GM12878 (cell line): ENCODE measurements at regions of chr11 and their contacts with region 1.

Region 1: DNA sequence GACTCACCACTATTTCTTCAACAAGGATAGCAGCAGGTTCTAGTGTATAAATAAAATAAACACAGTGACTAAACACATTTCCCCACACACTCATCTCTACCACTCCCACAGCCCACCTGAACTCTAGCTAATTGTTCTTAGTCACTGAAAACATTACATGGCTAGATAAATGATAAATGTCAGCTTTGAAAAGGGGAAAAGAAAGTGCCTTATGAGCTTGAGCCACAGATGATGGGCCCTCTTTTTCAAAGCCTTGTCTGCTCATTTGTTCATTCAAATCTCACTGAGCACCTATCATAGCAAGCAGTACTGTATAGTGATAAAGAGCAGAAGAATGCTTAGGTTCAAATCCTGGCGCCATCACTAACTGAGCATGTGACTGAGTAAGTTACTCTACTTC is 58.3 kb downstream of the SIK3 start:
- DNase-seq: no peak
- ATAC-seq: peak; percentile 72
- H3K4me3 ChIP-seq: no peak overlapping the region
- H3K27ac ChIP-seq: no peak overlapping the region
- H3K4me1 ChIP-seq: peaks cover 16% of the 10 kb centered on the region
- H3K27me3 ChIP-seq: no peaks in the 10 kb centered on the region
- CTCF ChIP-seq: no peak
- EP300 ChIP-seq: no peak
- POLR2A ChIP-seq: no peak
- RAD21 ChIP-seq: no peak

Region 2: GRCh38 chr11:116762132-116762531 is 277.8 kb before region 1 on chr11:
- CTCF ChIA-PET with region 1: no interaction called
- POLR2A ChIA-PET with region 1: no interaction called
- RAD21 ChIA-PET with region 1: no interaction called
- SMC1A ChIA-PET with region 1: no interaction called
- in situ Hi-C with region 1: no loop called
- intact Hi-C with region 1: no loop called
- DNase-seq: no peak
- ATAC-seq: no peak
- H3K4me3 ChIP-seq: no peak overlapping the region
- H3K27ac ChIP-seq: no peak overlapping the region
- H3K4me1 ChIP-seq: no peaks in the 10 kb centered on the region
- H3K27me3 ChIP-seq: no peaks in the 10 kb centered on the region
- CTCF ChIP-seq: no peak
- EP300 ChIP-seq: no peak
- POLR2A ChIP-seq: no peak
- RAD21 ChIP-seq: no peak

Region 3: GRCh38 chr11:116808386-116809194 is 231.3 kb before region 1 on chr11:
- CTCF ChIA-PET with region 1: no interaction called
- POLR2A ChIA-PET with region 1: no interaction called
- RAD21 ChIA-PET with region 1: no interaction called
- SMC1A ChIA-PET with region 1: no interaction called
- in situ Hi-C with region 1: no loop called
- intact Hi-C with region 1: no loop called
- DNase-seq: no peak
- ATAC-seq: no peak
- H3K4me3 ChIP-seq: no peak overlapping the region
- H3K27ac ChIP-seq: no peak overlapping the region
- H3K4me1 ChIP-seq: no peaks in the 10 kb centered on the region
- H3K27me3 ChIP-seq: no peaks in the 10 kb centered on the region
- CTCF ChIP-seq: no peak
- EP300 ChIP-seq: no peak
- POLR2A ChIP-seq: no peak
- RAD21 ChIP-seq: no peak

Region 4: DNA sequence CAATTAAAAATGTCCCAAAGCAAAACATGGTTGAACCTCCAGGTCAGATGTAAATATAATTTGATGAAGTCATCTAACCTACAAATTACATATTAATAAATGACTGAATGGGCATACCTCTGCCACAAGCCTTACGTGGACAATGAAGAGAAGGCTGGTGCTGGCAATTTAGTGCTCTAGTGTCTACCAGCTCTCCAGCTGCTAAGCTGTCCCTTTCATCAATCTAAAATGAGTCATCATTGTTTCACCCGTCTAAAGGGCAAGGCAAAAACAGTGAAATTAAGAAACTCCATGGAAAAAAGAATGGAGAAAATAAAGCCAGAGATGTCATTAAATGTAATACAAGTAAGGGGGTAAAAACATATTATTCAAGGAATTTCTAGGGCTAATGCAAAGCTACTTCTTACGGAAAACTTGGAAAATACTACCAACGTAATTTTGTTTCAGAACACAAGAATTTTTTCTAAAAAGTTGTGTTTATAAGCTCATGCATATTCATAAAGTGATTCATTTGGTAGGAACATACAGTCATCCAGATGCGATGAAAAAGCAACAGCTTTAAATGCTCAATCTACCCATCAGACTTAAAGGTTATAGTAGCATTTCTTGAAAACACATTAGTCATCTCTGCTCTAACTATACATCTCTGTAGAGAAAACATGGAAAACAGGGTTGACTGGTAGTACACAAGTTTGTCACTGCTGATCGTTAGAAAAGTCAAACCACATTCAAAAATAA is 13.1 kb before region 1 on chr11:
- CTCF ChIA-PET with region 1: interaction called, 10 read pairs
- POLR2A ChIA-PET with region 1: interaction called, 4 read pairs
- RAD21 ChIA-PET with region 1: interaction called, 3 read pairs
- SMC1A ChIA-PET with region 1: interaction called, 9 read pairs
- in situ Hi-C with region 1: no loop called
- intact Hi-C with region 1: no loop called
- DNase-seq: no peak
- ATAC-seq: peak; percentile 30
- H3K4me3 ChIP-seq: no peak overlapping the region
- H3K27ac ChIP-seq: no peak overlapping the region
- H3K4me1 ChIP-seq: peaks cover 36% of the 10 kb centered on the region
- H3K27me3 ChIP-seq: no peaks in the 10 kb centered on the region
- CTCF ChIP-seq: no peak
- EP300 ChIP-seq: no peak; a peak in 1 of 4 replicates
- POLR2A ChIP-seq: no peak
- RAD21 ChIP-seq: no peak